GM12878 (cell line): ENCODE measurements at regions of chr3 and their contacts with region 1.

Region 1: DNA sequence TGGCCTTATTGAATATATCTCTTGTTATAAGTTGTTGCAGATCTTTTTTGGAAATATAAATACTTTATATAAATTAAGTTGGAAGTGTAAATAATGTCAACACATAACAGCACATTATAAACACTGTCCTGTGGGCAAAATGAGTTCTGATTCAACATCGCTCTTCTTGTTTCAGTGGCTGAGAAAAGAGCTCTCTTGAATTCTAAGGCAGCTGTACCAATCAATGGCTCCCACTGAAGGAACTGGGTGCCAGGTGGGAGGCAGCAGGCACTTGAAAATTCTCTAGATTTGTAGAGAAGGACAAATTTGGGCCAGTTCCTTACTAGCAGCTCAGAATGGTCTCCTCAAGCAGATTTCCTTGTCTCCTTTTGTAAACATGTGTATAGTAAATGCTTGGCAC is 45.6 kb downstream of the CHST2 start:
- DNase-seq: no peak
- ATAC-seq: peak; percentile 48
- H3K4me3 ChIP-seq: peak overlapping the region; percentile 17; the same call in 1 of the 2 replicates
- H3K27ac ChIP-seq: peak overlapping the region; percentile 88
- H3K4me1 ChIP-seq: peaks cover 35% of the 10 kb centered on the region
- H3K27me3 ChIP-seq: no peaks in the 10 kb centered on the region
- CTCF ChIP-seq: no peak
- EP300 ChIP-seq: no peak
- POLR2A ChIP-seq: no peak
- RAD21 ChIP-seq: no peak

Region 2: GRCh38 chr3:143124601-143125520 is 40.4 kb before region 1 on chr3:
- CTCF ChIA-PET with region 1: interaction called, 3 read pairs
- POLR2A ChIA-PET with region 1: interaction called, 4 read pairs
- RAD21 ChIA-PET with region 1: interaction called, 14 read pairs
- SMC1A ChIA-PET with region 1: interaction called, 41 read pairs
- in situ Hi-C with region 1: no loop called
- intact Hi-C with region 1: loop called (anchors 5 kb)
- DNase-seq: no peak
- ATAC-seq: no peak
- H3K4me3 ChIP-seq: no peak overlapping the region
- H3K27ac ChIP-seq: no peak overlapping the region
- H3K4me1 ChIP-seq: peaks cover 27% of the 10 kb centered on the region
- H3K27me3 ChIP-seq: no peaks in the 10 kb centered on the region
- CTCF ChIP-seq: no peak
- EP300 ChIP-seq: no peak
- POLR2A ChIP-seq: no peak
- RAD21 ChIP-seq: no peak

Region 3: GRCh38 chr3:143366672-143367071 is 201.5 kb after region 1 on chr3:
- CTCF ChIA-PET with region 1: no interaction called
- POLR2A ChIA-PET with region 1: no interaction called
- RAD21 ChIA-PET with region 1: no interaction called
- SMC1A ChIA-PET with region 1: no interaction called
- in situ Hi-C with region 1: no loop called
- intact Hi-C with region 1: no loop called
- DNase-seq: no peak
- ATAC-seq: no peak
- H3K4me3 ChIP-seq: no peak overlapping the region
- H3K27ac ChIP-seq: no peak overlapping the region
- H3K4me1 ChIP-seq: no peaks in the 10 kb centered on the region
- H3K27me3 ChIP-seq: no peaks in the 10 kb centered on the region
- CTCF ChIP-seq: no peak
- EP300 ChIP-seq: no peak
- POLR2A ChIP-seq: no peak
- RAD21 ChIP-seq: no peak

Region 4: GRCh38 chr3:144457758-144458157 is 1292.5 kb after region 1 on chr3:
- CTCF ChIA-PET with region 1: no interaction called
- POLR2A ChIA-PET with region 1: no interaction called
- RAD21 ChIA-PET with region 1: no interaction called
- SMC1A ChIA-PET with region 1: no interaction called
- in situ Hi-C with region 1: no loop called
- intact Hi-C with region 1: no loop called
- DNase-seq: no peak
- ATAC-seq: no peak
- H3K4me3 ChIP-seq: no peak overlapping the region
- H3K27ac ChIP-seq: no peak overlapping the region
- H3K4me1 ChIP-seq: no peaks in the 10 kb centered on the region
- H3K27me3 ChIP-seq: no peaks in the 10 kb centered on the region
- CTCF ChIP-seq: no peak
- EP300 ChIP-seq: no peak
- POLR2A ChIP-seq: no peak
- RAD21 ChIP-seq: no peak